ENCODE measurements at regions of chr2 and their contacts with region 1.

Region 1: GRCh38 chr2:4012197-4012596 is 308.8 kb downstream of the DCDC2C start:
- DNase-seq: no peak

Region 2: GRCh38 chr2:3940661-3941060 is 71.5 kb before region 1 on chr2:
- intact Hi-C with region 1: loop called in 1 of 2 experiments (anchors 2 kb)
- DNase-seq: no peak